ENCODE measurements at regions of chr12 and their contacts with region 1.

Region 1: GRCh38 chr12:94149119-94149780 is 873 bp downstream of the PLXNC1 start:
- DNase-seq: no peak
- ATAC-seq: peak; percentile 50
- H3K4me3 ChIP-seq: peak overlapping the region; percentile 91
- H3K27ac ChIP-seq: peak overlapping the region; percentile 70
- H3K4me1 ChIP-seq: peaks cover 13% of the 10 kb centered on the region
- H3K27me3 ChIP-seq: no peaks in the 10 kb centered on the region
- CTCF ChIP-seq: peak; percentile 49 to 86 (median 70); a peak in 5 of 6 replicates
- EP300 ChIP-seq: no peak
- POLR2A ChIP-seq: peak; percentile 66
- RAD21 ChIP-seq: peak; percentile 60

Region 2: DNA sequence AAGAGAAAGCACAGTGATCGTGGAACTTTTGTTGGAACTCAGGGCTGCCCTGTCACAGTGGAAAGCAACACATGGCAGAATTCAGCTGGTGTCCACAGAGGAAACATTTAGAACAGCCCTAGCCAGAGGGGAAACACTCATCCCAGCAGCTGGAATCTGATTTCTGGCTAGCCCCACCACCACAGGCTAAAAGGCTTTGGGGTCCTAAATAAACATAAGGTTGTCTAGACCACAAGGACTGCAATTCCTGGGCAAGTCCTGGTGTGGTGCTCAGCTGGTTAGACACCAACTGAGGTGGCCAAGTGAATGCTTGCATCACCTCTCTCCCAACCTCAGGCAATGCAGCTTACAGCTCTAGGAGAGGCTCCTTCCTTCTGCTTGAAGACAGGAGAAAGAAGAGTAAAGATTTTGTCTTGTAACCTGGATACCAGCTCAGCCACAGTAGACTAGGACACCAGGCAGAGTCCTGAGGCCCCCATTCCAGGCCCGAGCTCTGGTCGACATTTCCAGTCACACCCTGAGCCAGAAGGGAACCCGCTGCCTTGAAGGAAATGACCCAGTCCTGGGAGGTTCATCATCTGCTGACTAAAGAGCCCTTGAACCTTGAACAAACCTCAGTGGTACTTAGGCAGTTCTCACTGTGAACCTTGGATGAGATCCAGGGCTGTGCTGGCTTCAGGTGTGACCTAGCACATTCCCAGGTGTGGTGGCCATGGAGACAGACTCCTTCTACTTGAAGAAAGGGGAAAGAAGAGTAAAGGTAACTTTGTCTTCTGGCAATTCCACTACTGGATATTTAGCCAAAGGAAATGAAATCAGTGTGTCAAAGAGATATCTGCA is 86.2 kb before region 1 on chr12:
- CTCF ChIA-PET with region 1: no interaction called
- POLR2A ChIA-PET with region 1: no interaction called
- RAD21 ChIA-PET with region 1: no interaction called
- SMC1A ChIA-PET with region 1: no interaction called
- in situ Hi-C with region 1: no loop called
- intact Hi-C with region 1: no loop called
- DNase-seq: no peak
- ATAC-seq: no peak
- H3K4me3 ChIP-seq: no peak overlapping the region
- H3K27ac ChIP-seq: no peak overlapping the region
- H3K4me1 ChIP-seq: no peaks in the 10 kb centered on the region
- H3K27me3 ChIP-seq: no peaks in the 10 kb centered on the region
- CTCF ChIP-seq: no peak
- EP300 ChIP-seq: no peak
- POLR2A ChIP-seq: no peak
- RAD21 ChIP-seq: no peak

Region 3: DNA sequence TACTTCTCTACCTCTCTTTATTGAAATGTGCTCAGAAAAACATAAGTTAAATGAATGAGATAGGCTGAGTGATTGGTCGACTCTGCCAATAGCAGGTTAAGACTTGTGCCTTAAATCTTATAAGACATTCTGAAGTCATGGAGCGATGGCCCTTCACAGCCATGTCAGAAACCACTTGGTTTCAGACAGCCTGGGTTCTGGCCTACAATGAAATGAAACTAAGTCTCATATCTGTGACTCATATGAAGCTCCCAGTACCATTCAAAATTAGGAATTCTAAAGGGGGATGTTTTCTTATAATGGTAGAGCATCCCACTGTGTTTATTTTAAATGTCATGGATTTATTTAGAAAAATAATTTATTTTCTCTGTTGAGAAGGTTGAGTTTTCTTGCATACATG is 41.8 kb after region 1 on chr12:
- CTCF ChIA-PET with region 1: interaction called, 6 read pairs
- POLR2A ChIA-PET with region 1: interaction called, 4 read pairs
- RAD21 ChIA-PET with region 1: interaction called, 7 read pairs
- SMC1A ChIA-PET with region 1: interaction called, 13 read pairs
- in situ Hi-C with region 1: no loop called
- intact Hi-C with region 1: no loop called
- DNase-seq: no peak
- ATAC-seq: peak; percentile 83
- H3K4me3 ChIP-seq: no peak overlapping the region
- H3K27ac ChIP-seq: peak overlapping the region; percentile 70
- H3K4me1 ChIP-seq: peaks cover 23% of the 10 kb centered on the region
- H3K27me3 ChIP-seq: no peaks in the 10 kb centered on the region
- CTCF ChIP-seq: no peak
- EP300 ChIP-seq: no peak
- POLR2A ChIP-seq: no peak
- RAD21 ChIP-seq: no peak

Region 4: DNA sequence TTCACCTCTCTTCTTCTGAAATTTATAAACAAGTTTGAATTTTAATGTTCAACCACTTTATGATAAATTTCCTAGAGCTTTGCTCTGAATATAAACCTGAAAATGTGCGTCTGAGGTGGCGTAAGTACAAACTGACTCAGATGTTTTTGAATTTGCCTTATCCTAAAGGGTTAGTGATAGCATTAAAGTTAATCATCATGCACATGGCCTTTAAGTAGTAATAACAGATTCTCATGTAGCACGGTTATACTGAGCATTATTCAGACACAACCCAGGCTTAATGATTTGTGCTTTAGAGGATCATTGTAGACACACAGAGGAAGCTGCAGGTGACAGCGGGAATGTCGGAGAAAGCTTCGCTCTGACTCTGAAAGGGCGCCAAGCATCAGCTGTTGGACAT is 90.1 kb after region 1 on chr12:
- CTCF ChIA-PET with region 1: interaction called, 8 read pairs
- POLR2A ChIA-PET with region 1: interaction called, 6 read pairs
- RAD21 ChIA-PET with region 1: interaction called, 15 read pairs
- SMC1A ChIA-PET with region 1: interaction called, 13 read pairs
- in situ Hi-C with region 1: no loop called
- intact Hi-C with region 1: no loop called
- DNase-seq: no peak
- ATAC-seq: no peak
- H3K4me3 ChIP-seq: no peak overlapping the region
- H3K27ac ChIP-seq: peak overlapping the region; percentile 86
- H3K4me1 ChIP-seq: peaks cover 23% of the 10 kb centered on the region
- H3K27me3 ChIP-seq: no peaks in the 10 kb centered on the region
- CTCF ChIP-seq: no peak
- EP300 ChIP-seq: no peak
- POLR2A ChIP-seq: no peak
- RAD21 ChIP-seq: no peak

Region 5: GRCh38 chr12:94262228-94263010 is 113.2 kb after region 1 on chr12:
- CTCF ChIA-PET with region 1: interaction called, 7 read pairs
- POLR2A ChIA-PET with region 1: interaction called, 8 read pairs
- RAD21 ChIA-PET with region 1: interaction called, 22 read pairs
- SMC1A ChIA-PET with region 1: interaction called, 39 read pairs
- in situ Hi-C with region 1: no loop called
- intact Hi-C with region 1: loop called (anchors 2 kb)
- DNase-seq: no peak
- ATAC-seq: peak; percentile 80
- H3K4me3 ChIP-seq: peak overlapping the region; percentile 35; the same call in 1 of the 2 replicates
- H3K27ac ChIP-seq: peak overlapping the region; percentile 88
- H3K4me1 ChIP-seq: peaks cover 59% of the 10 kb centered on the region
- H3K27me3 ChIP-seq: no peaks in the 10 kb centered on the region
- CTCF ChIP-seq: no peak
- EP300 ChIP-seq: peak in 1 of 2 experiments; percentile 11; a peak in 1 of 4 replicates
- POLR2A ChIP-seq: peak; percentile 76
- RAD21 ChIP-seq: no peak; the same call in 1 of the 2 replicates

Region 6: GRCh38 chr12:94429633-94430032 is 280.4 kb after region 1 on chr12:
- CTCF ChIA-PET with region 1: interaction called, 9 read pairs
- POLR2A ChIA-PET with region 1: no interaction called
- RAD21 ChIA-PET with region 1: interaction called, 11 read pairs
- SMC1A ChIA-PET with region 1: interaction called, 19 read pairs
- in situ Hi-C with region 1: no loop called
- intact Hi-C with region 1: loop called (anchors 5 kb)
- DNase-seq: no peak
- ATAC-seq: peak; percentile 70
- H3K4me3 ChIP-seq: no peak overlapping the region
- H3K27ac ChIP-seq: no peak overlapping the region
- H3K4me1 ChIP-seq: peaks cover 4% of the 10 kb centered on the region; the same call in 1 of the 2 replicates
- H3K27me3 ChIP-seq: no peaks in the 10 kb centered on the region
- CTCF ChIP-seq: no peak
- EP300 ChIP-seq: no peak
- POLR2A ChIP-seq: no peak
- RAD21 ChIP-seq: no peak

Region 7: DNA sequence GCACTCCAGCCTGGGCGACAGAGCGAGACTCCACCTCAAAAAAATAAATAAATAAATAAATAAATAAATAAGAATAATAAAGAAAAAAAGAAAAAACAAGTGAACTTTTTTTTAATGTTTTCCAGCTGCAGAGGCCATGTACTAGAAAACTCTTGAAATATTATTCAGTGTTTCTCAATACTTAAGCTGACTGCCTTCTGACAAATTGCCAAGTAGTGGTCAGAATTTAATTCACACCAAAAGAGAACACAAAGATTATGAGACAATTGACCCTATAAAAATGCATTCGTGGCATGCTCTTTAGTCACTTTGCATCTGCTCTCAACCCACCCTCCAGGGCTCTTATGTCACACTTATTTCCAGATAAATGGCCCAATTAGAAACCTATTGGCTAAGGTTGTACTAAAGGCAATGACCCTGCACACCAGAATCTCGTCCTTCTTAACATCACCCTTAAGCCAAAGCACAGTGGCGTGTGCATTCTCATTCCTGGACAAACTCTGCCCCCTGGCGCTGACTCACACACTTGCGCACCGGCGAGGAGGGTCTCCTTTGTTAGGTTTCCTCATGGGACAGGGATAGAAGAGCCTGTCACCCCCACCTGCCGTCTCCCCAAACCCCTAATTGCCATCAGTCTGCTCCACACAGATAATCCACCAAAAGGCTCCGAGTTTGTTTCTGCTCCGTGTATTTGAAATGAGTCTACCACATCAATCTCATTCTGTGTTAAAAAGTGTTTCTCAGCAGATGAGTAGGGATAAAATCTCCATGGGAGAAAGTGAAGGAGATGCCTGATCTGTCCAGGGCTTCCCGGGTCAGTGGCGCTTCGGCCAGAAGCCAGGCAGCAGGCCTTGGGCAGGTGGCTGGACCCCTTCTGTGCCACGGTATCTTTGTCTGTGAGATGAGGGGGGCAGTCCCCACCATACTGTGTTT is 383.5 kb after region 1 on chr12:
- CTCF ChIA-PET with region 1: interaction called, 17 read pairs
- POLR2A ChIA-PET with region 1: no interaction called
- RAD21 ChIA-PET with region 1: interaction called, 23 read pairs
- SMC1A ChIA-PET with region 1: interaction called, 19 read pairs
- in situ Hi-C with region 1: no loop called
- intact Hi-C with region 1: no loop called
- DNase-seq: peak; percentile 36
- ATAC-seq: peak; percentile 99
- H3K4me3 ChIP-seq: no peak overlapping the region
- H3K27ac ChIP-seq: no peak overlapping the region
- H3K4me1 ChIP-seq: no peaks in the 10 kb centered on the region
- H3K27me3 ChIP-seq: no peaks in the 10 kb centered on the region; a peak in 1 of 4 replicates
- CTCF ChIP-seq: peak; percentile 83 to 89 (median 86)
- EP300 ChIP-seq: no peak
- POLR2A ChIP-seq: no peak
- RAD21 ChIP-seq: peak; percentile 99